Posterior vena cava (tissue), 2 donors: ENCODE measurements at regions of chr18 and their contacts with region 1.

Region 1: DNA sequence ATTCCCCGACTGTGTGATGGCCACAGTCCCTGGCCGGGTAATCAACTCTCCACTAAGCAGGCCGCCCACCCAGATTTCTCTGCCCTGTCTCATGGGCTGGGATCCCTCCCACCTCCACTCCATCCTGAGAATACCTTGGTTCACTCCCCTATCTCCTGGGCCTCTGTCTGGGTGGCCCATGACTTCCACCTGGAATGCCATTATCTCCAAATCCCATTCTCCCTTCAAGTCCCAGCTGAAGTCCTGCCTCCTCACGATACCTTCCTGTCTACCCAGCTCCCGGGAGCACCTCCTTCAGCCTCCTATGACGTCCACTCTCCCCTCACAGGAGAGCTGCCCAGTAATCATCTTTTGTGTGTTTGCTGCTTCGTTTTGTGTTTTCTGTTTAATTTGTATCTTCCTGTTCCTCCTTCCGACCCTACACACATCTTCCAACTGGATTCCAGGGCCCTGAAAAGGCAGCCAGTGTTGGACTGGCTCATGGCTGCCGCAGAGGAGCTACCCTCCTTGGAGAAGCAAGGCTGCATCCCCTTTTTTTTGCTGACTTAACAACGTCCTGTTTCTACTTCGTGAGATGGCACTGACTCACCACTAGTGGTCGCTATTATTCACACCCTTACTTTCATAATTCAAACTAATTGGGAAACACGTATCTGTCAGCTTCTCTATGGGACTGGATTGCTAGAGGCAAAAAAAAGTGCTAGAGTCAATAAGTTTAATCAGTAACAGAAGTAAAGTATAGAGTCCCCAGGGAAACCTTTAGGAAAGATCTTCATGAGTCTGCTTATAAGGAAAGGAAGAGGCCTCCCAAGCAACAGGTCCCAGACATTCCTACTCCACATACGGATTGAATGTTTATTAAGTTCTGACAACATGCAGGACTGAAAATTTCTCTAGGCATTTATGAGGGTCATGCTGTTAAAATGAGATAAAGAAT is 171.9 kb upstream of the GATA6 start:
- DNase-seq: no peak

Region 2: DNA sequence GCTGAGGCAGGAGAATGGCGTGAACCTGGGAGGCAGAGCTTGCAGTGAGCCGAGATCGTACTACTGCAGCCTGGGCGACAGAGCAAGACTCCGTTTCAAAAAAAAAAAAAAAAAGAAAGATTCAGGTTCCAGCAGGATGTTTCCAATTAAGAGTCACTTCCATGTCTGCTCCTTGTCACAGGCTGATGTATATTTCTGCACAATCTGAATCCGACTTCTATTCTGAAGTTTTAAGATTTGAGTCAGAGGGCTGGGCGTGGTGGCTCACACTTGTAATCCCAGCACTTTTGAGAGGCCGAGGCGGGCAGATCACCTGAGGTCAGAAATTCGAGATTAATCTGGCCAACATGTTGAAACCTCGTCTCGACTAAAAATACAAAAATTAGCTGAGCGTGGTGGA is 360.7 kb before region 1 on chr18:
- intact Hi-C with region 1: loop called in 1 of 2 experiments (anchors 5 kb)
- DNase-seq: no peak

Region 3: DNA sequence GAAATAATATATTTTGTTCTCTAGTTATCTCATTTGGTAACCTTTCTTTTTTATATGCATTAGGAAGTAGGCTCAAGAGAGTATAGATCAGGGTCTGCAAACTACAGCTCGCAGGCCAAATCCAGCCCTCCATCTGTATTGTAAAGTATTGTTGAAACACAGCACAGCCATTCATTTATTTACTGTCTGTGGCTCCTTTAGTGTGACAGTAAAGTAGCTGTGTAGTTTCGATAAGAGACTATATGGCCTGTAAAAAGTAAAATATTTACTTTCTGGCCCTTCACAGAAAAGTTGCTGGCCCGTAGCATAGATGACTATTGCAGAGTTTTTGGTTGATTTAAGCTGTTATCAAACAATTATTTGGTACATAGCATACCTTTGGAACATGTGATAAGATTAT is 189.3 kb before region 1 on chr18:
- intact Hi-C with region 1: no loop called
- DNase-seq: no peak

Region 4: DNA sequence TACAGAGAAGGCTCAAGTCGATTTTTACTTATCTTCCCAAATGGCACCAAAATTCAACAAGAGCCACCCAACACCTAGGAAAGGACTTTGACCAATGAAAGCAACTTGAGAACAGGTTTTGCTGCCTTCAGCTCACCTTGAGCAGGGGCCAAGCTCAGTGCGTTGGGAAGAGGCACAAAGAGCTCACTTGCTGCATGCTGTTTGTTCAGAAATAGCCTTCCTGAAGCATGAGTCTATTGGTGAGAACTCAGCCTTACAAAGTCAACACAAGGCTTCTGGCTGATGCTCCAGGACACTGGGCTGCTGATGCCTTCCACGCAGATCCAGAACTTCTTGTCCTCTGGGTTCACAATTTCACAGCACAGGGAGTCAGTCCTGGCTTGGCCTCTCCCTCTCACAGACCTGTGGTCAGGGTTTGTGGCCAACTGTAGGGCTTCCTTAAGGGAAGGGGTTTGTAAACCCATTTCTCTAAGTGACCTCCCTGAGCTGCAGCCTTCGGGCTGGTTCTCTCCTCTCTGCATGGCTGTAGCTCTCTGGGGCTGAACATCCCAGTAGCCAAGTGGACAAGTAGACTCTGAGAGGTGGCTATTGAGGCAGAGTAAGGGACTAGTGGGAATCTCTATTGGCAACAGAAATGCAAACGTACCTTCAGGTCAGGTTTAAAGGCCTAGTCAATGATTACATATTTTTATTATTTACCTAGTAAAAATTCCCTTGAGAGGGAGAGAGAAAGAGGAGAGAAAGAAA is 47.2 kb after region 1 on chr18:
- intact Hi-C with region 1: no loop called
- DNase-seq: no peak